Dorsolateral prefrontal cortex (tissue), 120 donors: ENCODE measurements at regions of chr21 and their contacts with region 1.

Region 1: GRCh38 chr21:32257962-32258785 is 20.7 kb downstream of the MIS18A start:
- DNase-seq: peak; percentile 51 to 84 (median 76)
- H3K4me3 ChIP-seq: no peak overlapping the region
- H3K27ac ChIP-seq: peak overlapping the region in 3 of 59 donors; percentile 3 to 18 (median 4)
- H3K27me3 ChIP-seq: no peaks in the 10 kb centered on the region
- CTCF ChIP-seq: peak in 55 of 56 donors; percentile 77 to 95 (median 84)

Region 2: DNA sequence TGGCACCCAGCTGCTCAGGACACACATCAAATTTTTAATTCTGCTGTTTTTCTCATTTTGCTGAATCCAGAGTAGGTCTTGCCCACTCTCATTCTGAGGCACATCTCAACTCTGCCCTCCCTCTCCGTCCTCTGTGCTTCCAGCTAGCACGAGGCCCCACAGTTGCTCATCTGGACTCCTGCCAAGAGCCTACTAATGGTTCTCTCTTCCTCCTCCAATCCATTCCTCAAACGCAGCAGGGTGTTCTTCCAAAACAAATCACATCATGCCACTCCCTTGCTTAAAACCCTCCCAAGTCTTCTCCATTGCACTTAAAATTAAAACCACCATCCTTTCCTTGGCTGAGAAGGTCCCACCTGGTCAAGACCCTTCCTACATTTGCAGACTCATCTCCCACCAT is 476.4 kb before region 1 on chr21:
- intact Hi-C with region 1: loop called (anchors 1 to 2 kb)
- DNase-seq: peak in 2 of 10 donors; percentile 21 to 49
- H3K4me3 ChIP-seq: no peak overlapping the region
- H3K27ac ChIP-seq: no peak overlapping the region
- H3K27me3 ChIP-seq: no peaks in the 10 kb centered on the region
- CTCF ChIP-seq: no peak

Region 3: DNA sequence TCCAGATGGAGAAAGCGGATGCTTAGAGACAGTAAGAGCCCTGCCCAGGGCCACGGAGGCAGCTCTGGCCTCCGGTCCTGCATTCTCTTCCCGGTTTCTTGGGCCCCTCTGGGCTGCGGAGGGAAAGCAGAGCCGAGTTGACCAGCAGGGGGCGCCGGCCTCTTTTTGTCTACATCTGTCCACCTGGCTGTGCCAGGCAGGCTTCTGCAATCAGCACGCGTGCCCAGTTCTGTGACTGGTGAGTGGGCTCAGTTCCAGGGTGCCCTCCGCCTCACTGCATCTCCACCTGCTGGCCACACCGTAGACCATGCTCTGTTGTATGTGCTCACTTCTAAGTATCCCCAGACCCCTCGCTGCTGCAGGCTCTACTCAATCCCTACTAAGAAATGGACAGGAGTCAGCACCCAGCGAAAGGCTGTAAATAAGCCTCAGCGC is 392.1 kb before region 1 on chr21:
- intact Hi-C with region 1: loop called (anchors 2 kb)
- DNase-seq: peak; percentile 87 to 94 (median 91)
- H3K4me3 ChIP-seq: peak overlapping the region in 36 of 59 donors; percentile 0 to 45 (median 28)
- H3K27ac ChIP-seq: peak overlapping the region in 21 of 59 donors; percentile 5 to 65 (median 32)
- H3K27me3 ChIP-seq: no peaks in the 10 kb centered on the region
- CTCF ChIP-seq: peak; percentile 80 to 99 (median 95)

Region 4: GRCh38 chr21:32096411-32096810 is 161.8 kb before region 1 on chr21:
- intact Hi-C with region 1: loop called in 1 of 2 experiments (anchors 10 kb)
- DNase-seq: no peak
- H3K4me3 ChIP-seq: no peak overlapping the region
- H3K27ac ChIP-seq: no peak overlapping the region
- H3K27me3 ChIP-seq: no peaks in the 10 kb centered on the region
- CTCF ChIP-seq: peak in 20 of 56 donors; percentile 8 to 31 (median 21)